Activated CD4-positive, alpha-beta T cell treated with anti-CD3 and anti-CD28 coated beads, Interleukin-2, amount 10 ng/mL, durations not matched to agents 24 days and 14 days (primary cell): ENCODE measurements at regions of chr4 and their contacts with region 1.

Region 1: DNA sequence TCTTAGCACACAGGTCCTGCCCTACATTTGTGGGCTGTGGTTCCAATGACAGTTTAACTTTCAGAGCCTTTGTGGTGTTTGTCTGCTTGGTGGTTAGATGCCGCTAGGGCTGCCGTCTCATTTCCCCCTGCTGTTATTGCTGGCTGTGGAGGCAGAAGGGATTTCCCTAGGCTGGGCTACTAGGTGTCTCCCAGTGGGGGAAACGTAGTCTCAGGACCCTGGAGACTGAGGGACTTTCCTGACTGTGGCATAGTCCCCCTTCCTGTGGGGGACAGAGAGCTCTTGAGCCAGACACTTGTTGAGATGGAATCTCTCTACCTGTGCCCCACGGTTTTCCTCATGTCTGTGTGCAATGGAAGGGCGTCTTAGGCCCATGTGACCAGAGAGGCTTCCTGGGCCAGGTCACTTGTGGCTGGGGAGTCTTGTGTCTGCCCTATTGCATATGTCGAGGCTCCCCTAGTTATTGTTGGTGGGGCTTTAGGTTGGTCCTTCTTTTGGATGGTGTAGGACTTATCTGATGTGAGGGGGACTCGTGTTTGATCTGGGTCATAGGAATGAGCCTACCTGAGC is 68.2 kb downstream of the ARHGAP10 start:
- DNase-seq: peak; percentile 90
- H3K4me3 Mint-ChIP-seq: peak overlapping the region; percentile 74
- H3K27ac Mint-ChIP-seq: peak overlapping the region; percentile 86
- H3K4me1 Mint-ChIP-seq: peaks cover 49% of the 10 kb centered on the region
- H3K27me3 Mint-ChIP-seq: peaks cover 15% of the 10 kb centered on the region

Region 2: DNA sequence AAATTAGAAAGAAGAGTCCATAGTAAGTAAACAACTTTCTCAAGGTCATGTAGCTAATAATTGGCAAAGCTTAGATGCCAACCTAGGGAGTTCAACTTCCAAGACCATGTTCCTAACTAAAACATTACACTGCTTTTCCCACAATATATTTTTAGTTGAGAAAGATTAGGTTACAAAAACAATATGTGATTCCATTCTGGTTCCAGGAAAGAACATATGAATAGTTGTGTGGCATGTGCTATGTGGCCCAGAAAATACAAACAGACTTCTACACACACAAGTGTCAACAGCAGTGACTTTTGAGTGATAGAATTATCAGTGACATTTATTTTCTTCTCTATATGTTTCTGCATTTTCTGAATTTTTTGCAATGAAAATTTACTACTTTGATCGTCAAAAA is 381.8 kb before region 1 on chr4:
- intact Hi-C with region 1: no loop called
- DNase-seq: no peak
- H3K4me3 Mint-ChIP-seq: no peak overlapping the region
- H3K27ac Mint-ChIP-seq: no peak overlapping the region
- H3K4me1 Mint-ChIP-seq: no peaks in the 10 kb centered on the region
- H3K27me3 Mint-ChIP-seq: no peaks in the 10 kb centered on the region

Region 3: GRCh38 chr4:147620315-147620714 is 179.8 kb before region 1 on chr4:
- intact Hi-C with region 1: no loop called
- DNase-seq: peak; percentile 37
- H3K4me3 Mint-ChIP-seq: peak overlapping the region; percentile 29
- H3K27ac Mint-ChIP-seq: no peak overlapping the region
- H3K4me1 Mint-ChIP-seq: peaks cover 23% of the 10 kb centered on the region
- H3K27me3 Mint-ChIP-seq: peaks cover 1% of the 10 kb centered on the region

Region 4: GRCh38 chr4:147846318-147847155 is 46.5 kb after region 1 on chr4:
- intact Hi-C with region 1: loop called (anchors 1 kb)
- DNase-seq: peak; percentile 80
- H3K4me3 Mint-ChIP-seq: no peak overlapping the region
- H3K27ac Mint-ChIP-seq: no peak overlapping the region
- H3K4me1 Mint-ChIP-seq: peaks cover 11% of the 10 kb centered on the region
- H3K27me3 Mint-ChIP-seq: peaks cover 3% of the 10 kb centered on the region

Region 5: DNA sequence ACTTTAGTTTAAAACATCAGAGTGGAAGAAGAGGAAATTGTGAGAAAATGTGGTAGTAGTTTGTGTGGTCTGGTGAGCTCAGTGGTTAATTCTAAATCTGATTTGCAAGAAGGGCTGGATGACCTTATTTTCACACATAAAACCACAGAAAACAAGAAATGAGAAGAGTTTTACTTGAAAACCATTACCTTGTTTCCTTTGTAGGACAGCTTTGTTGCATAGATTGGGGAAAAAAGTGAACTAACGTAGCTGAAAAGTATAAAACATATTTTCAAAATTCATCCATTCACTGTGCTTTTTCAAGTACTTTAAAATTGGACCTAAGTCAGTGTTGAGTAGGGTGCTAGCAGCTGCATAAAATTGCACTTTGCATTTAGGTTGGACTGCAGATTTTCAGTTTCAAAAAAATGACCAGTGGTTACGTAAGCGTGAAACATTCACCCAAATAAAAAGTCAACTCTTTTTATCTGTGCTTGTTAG is 143.1 kb after region 1 on chr4:
- intact Hi-C with region 1: loop called (anchors 5 kb)
- DNase-seq: no peak
- H3K4me3 Mint-ChIP-seq: peak overlapping the region; percentile 1
- H3K27ac Mint-ChIP-seq: no peak overlapping the region
- H3K4me1 Mint-ChIP-seq: peaks cover 16% of the 10 kb centered on the region
- H3K27me3 Mint-ChIP-seq: no peaks in the 10 kb centered on the region